HEK293 (cell line): ENCODE measurements at regions of chr5 and their contacts with region 1.

Region 1: DNA sequence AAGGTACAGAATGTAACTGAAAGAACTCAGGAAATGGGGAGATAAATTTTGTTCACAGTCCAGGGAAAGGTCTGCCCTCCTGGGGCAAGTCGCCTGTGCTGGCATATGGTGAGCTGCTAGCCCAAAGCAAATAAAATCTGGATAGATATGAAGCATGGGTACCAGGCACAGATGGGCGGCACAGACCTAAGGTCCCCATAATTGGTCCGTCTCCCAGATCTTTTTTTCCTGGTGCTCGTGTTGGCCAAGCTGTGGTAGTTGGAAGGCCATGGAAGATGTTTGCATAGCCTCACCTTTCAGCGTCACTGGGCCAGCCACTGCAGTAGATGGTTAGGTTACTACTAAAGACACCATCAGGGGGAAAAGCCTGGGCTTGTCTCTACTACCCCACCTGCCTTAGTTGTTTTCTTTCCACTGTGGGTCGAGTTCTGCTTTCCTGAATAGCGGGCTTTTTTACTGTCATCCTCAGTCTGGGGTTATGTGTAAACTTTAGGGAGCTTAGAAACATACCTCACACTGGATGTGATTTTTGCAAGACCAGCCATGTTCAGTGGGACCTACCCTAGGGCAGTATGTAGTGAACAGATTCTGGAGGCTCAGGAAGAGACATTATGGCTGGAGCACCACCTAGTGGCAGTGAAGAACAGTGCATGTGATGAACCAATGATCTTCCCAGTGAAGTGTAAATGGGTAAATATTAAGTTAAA is 24.2 kb upstream of the GLRX start:
- H3K4me3 ChIP-seq: no peak overlapping the region
- H3K27ac ChIP-seq: no peak overlapping the region
- H3K4me1 ChIP-seq: no peaks in the 10 kb centered on the region
- CTCF ChIP-seq: peak; percentile 73

Region 2: DNA sequence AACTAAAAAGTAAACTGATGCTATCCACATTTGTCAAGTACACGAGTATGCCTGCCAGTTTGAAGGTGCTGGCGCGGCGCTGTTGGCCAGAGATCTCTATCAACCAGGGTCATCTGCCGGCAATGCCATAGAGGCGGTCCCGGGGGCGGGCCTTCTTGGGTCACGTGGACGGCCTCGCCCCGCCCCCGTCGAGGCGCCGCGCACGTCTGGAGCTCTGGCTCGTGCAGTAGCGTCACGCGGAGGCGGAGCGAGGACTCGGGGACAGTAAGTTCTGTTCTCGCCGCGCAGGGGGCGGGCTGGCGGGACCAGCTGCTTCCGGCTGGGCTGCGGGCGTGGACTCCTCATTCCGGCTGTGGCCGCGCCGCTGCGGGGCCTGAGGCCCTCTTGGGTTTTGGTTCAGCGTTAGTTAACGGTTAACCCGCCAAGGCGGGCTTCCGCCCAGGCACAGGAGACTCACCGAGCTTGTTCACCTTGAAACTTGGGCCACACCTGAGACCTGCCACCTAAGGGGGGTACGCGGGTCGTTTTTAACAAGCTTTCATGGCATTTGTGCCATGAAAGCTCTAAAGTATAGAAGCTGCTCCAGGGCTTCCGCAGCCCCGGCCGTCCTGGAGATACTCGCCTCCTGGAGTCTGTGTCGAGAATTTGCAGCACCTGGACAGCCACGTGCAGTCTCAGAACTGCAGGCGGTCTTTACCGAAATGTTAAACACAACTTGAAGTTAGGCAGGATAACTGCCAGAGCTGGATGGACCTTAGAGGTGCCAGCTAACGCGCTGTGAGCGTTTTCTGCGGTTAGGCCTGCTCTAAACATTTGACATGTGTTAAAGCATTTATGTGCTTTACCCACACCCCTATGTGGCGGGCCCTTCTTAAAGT is 199.9 kb before region 1 on chr5 and contains the start of gene RFESD:
- CTCF ChIA-PET with region 1: interaction called, 64 read pairs
- POLR2A ChIA-PET with region 1: interaction called, 3 read pairs
- H3K4me3 ChIP-seq: peak within 1 kb of the TSS; percentile 40
- H3K27ac ChIP-seq: peak within 1 kb of the TSS; percentile 79
- H3K4me1 ChIP-seq: peaks cover 5% of the 10 kb centered on the region; the same call in 1 of the 2 replicates
- CTCF ChIP-seq: 0 out of 2 replicates have a peak, but pooled peaks have one; percentile 37

Region 3: DNA sequence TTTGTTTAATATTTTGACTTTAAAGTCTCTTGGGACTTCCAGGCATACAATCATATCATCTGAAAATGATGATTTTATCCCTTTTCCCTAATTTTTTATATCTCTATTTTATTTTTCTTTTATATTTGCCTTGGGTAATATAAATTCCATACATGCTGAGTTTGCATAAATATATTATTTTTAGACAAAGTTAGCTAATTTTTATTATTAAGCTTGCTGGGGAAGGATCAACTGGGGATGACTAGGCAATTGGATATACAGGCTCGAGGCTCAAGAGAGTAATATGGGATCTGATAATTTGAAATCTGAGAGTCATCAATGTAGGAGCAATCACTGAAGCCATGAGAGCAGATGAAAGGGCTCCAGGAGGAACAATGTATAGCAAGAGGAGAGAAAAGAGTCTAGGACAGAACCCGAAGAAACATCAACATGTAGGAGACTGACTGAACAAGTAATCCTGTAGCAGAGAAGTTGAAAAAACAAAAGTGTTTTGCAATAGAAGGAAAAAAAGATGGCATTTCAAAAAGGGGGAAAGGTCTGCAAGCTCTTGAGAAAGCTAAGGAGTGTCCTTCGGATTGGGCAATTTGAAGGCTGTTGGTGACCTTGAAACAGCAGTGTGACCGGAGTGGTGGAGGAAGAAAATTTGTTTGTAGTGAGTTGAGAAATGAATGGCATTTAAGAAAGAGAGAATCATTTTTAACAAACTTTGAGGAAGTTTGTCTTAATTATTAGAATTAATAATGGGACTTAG is 132.6 kb before region 1 on chr5:
- CTCF ChIA-PET with region 1: no interaction called
- POLR2A ChIA-PET with region 1: no interaction called
- H3K4me3 ChIP-seq: no peak overlapping the region
- H3K27ac ChIP-seq: no peak overlapping the region
- H3K4me1 ChIP-seq: peaks cover 4% of the 10 kb centered on the region; the same call in 1 of the 2 replicates
- CTCF ChIP-seq: no peak

Region 4: DNA sequence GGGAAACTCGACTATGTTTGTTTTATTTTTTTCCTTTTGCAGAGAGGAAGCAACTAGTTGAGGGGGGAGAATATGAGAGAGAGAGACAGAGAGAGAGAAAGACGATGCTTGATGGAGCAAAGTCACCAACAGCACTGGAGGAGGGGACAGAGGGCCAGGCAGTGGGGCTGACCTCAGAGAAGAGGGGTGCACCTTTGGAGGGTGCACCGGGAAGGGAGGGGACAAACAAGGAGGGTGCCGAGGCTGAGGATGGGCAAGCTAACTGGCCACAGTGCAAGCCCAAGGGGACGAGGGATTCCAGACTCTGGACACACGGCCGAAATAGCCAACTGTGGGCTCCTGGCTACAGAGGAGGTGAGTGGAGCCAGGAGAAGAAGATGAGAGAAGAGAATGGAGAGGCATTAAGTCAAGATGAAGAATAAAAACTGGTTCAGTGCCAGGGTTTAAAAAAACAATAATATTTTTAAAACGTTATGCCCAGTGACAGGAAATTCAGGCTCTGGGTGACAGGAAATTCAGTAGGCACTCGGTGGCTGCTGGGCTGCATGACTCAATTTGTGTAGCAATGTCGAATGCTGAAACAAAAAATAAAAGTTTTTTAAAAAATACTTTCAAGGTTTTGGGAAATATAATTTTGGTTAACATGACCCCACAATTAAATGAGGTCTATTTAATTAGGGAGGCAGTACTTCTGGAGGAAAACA is 10.9 kb before region 1 on chr5:
- CTCF ChIA-PET with region 1: interaction called, 22 read pairs
- POLR2A ChIA-PET with region 1: no interaction called
- H3K4me3 ChIP-seq: no peak overlapping the region
- H3K27ac ChIP-seq: no peak overlapping the region
- H3K4me1 ChIP-seq: peaks cover 7% of the 10 kb centered on the region
- CTCF ChIP-seq: no peak

Region 5: GRCh38 chr5:95858661-95859326 is 12.1 kb after region 1 on chr5:
- CTCF ChIA-PET with region 1: interaction called, 13 read pairs
- POLR2A ChIA-PET with region 1: no interaction called
- H3K4me3 ChIP-seq: no peak overlapping the region
- H3K27ac ChIP-seq: 0 out of 2 replicates have a peak overlapping the region, but pooled peaks have one; percentile 18
- H3K4me1 ChIP-seq: peaks cover 23% of the 10 kb centered on the region
- CTCF ChIP-seq: peak; percentile 98

Region 6: DNA sequence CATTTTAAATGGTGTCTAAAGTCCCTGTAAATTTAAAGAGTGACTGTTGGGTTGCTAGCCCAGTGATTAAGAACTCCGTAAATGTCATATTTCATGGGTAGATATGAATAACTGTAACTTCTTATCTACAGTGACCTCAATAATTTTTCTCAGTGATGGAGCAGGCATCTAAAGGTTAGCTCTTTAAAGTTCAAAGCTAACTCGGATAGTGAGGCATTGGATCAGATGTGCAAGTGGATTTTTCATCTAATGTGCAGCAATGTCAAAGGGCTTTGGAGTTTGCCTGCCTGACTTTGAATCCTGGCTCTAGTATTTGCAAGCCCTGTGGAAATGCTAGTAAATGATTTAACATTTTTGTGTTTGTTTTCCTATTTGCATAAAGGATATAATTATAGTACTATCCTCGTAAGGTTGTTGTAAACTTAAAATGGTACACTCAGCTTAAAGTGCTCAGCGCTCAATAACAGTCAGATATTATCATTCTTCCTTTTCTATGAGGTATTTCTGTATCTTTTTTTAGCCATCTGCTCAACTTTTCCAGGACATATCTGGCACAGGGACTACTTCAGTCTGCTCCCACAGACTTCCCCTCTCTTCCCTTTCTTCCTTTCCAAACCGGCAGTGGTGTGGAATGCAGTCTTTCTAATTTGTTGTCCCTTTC is 278.7 kb after region 1 on chr5:
- CTCF ChIA-PET with region 1: no interaction called
- POLR2A ChIA-PET with region 1: no interaction called
- H3K4me3 ChIP-seq: no peak overlapping the region
- H3K27ac ChIP-seq: no peak overlapping the region
- H3K4me1 ChIP-seq: peaks cover 7% of the 10 kb centered on the region; the same call in 1 of the 2 replicates
- CTCF ChIP-seq: no peak